PC-3 (cell line): ENCODE measurements at regions of chr19 and their contacts with region 1.

Region 1: DNA sequence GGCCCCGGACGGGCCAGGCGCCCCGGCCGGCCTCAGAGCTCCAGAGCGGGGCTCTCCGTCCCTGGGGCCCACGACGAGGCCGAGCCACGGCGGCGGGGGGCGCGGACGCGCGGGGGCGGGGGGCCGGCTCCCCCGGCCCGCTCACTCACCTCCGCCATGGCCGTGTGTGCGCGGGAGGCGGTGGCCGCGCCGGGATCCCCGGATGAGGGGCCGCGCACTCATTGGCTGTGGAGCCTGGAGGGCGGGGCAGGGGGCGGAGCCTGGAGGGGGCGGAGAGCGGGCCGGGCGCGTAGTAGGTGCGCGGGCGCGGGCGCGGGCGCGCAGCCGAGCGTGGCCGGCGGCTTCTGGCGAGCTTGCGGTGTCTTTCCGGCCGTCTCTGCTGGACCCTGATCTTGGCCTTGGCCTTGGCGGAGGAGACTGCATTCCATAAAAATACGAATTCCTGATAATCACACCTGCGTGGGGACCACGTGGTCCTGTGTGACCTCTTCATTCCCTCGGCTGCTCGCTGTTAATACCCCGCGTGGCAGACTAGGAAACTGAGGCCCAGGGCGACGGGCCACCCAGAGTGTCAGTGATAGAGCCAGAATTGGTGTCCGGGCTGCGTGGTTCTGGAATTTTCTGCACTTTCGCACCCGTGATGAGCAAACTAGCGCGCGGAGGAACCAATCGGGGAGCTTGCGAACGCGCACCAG is at the start of gene MIER2:
- DNase-seq: peak; percentile 71
- ATAC-seq: peak; percentile 75
- H3K4me3 ChIP-seq: peak within 1 kb of the TSS; percentile 75
- H3K27ac ChIP-seq: peak within 1 kb of the TSS; percentile 74
- H3K4me1 ChIP-seq: peaks cover 25% of the 10 kb centered on the region
- H3K27me3 ChIP-seq: no peaks in the 10 kb centered on the region
- CTCF ChIP-seq: no peak
- total RNA-seq, gene MIER2: not detected in 2 replicates

Region 2: GRCh38 chr19:262125-262524 is 82.6 kb before region 1 on chr19:
- CTCF ChIA-PET with region 1: no interaction called
- POLR2A ChIA-PET with region 1: no interaction called
- intact Hi-C with region 1: no loop called
- DNase-seq: no peak
- ATAC-seq: no peak
- H3K4me3 ChIP-seq: no peak overlapping the region
- H3K27ac ChIP-seq: no peak overlapping the region
- H3K4me1 ChIP-seq: no peaks in the 10 kb centered on the region
- H3K27me3 ChIP-seq: no peaks in the 10 kb centered on the region
- CTCF ChIP-seq: no peak

Region 3: GRCh38 chr19:410243-410781 is 65.5 kb after region 1 on chr19:
- CTCF ChIA-PET with region 1: interaction called, 10 read pairs
- POLR2A ChIA-PET with region 1: no interaction called
- intact Hi-C with region 1: no loop called
- DNase-seq: no peak
- ATAC-seq: no peak
- H3K4me3 ChIP-seq: no peak overlapping the region; the same call in 1 of the 2 replicates
- H3K27ac ChIP-seq: no peak overlapping the region
- H3K4me1 ChIP-seq: no peaks in the 10 kb centered on the region
- H3K27me3 ChIP-seq: peaks cover 10% of the 10 kb centered on the region; the same call in 1 of the 2 replicates
- CTCF ChIP-seq: no peak